ENCODE measurements at regions of chr3 and their contacts with region 1.

Region 1: DNA sequence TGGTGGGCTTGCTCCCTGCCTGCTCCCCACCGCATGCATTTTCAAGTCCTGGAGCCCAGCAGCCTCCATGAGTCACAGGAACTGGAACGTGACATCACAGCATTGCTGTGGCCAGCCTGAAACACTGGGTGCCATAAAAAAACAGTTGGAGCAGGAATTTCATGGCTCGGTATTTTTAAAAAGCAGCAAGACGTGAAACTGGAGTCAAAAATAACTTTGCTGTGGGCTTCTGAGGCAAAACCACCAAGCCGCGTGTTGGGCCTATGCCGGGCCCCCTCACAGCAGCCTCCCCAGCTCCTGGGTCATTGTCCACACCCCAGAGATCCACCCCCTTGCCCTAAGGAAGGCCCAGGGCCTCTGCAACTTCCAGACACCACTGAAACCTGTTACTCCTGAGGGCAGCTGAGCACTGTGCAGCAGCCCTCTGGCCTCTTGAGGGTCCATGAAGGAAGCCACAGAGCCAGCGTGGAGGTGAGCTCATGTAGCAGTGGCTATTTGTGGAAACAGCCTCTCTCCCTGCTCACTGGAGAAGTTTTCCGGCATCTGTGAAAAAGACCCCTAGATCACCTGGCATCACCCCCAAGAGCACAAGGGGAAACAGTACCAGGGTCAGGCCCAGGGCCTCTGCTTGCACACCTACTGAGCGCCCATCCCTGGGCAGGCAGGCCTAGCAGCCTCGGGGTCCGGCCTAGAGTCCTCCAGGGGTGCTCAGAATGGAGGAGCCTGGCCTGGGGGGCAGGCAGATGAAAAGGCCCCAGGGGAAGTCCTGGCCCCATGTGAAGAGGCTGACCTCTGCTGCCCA is 34.0 kb upstream of the DUSP7 start:
- DNase-seq: peak in 1 of 2 donors; percentile 93
- H3K4me3 ChIP-seq: no peak overlapping the region
- H3K27ac ChIP-seq: peak overlapping the region; percentile 98 to 99
- H3K4me1 ChIP-seq: peaks cover 31 to 41% of the 10 kb centered on the region in 2 donors
- H3K27me3 ChIP-seq: no peaks in the 10 kb centered on the region
- CTCF ChIP-seq: no peak

Region 2: GRCh38 chr3:52022323-52023100 is 67.8 kb before region 1 on chr3:
- intact Hi-C with region 1: loop called (anchors 2 kb)
- DNase-seq: peak in 1 of 2 donors; percentile 85
- H3K4me3 ChIP-seq: peak overlapping the region in 1 of 2 donors; percentile 40
- H3K27ac ChIP-seq: peak overlapping the region; percentile 91 to 96
- H3K4me1 ChIP-seq: peaks cover 34 to 76% of the 10 kb centered on the region in 2 donors
- H3K27me3 ChIP-seq: no peaks in the 10 kb centered on the region
- CTCF ChIP-seq: no peak

Region 3: GRCh38 chr3:52070724-52071621 is 19.4 kb before region 1 on chr3:
- intact Hi-C with region 1: loop called (anchors 2 kb)
- DNase-seq: peak in 1 of 2 donors; percentile 89
- H3K4me3 ChIP-seq: no peak overlapping the region
- H3K27ac ChIP-seq: peak overlapping the region; percentile 84 to 95
- H3K4me1 ChIP-seq: peaks cover 3 to 23% of the 10 kb centered on the region in 2 donors
- H3K27me3 ChIP-seq: no peaks in the 10 kb centered on the region
- CTCF ChIP-seq: peak; percentile 5 to 43 (median 8)

Region 4: GRCh38 chr3:52076896-52077780 is 13.2 kb before region 1 on chr3:
- intact Hi-C with region 1: loop called (anchors 1 kb)
- DNase-seq: no peak
- H3K4me3 ChIP-seq: no peak overlapping the region
- H3K27ac ChIP-seq: peak overlapping the region; percentile 75 to 80
- H3K4me1 ChIP-seq: peaks cover 3 to 16% of the 10 kb centered on the region in 2 donors
- H3K27me3 ChIP-seq: no peaks in the 10 kb centered on the region
- CTCF ChIP-seq: peak; percentile 22 to 45 (median 25)

Region 5: DNA sequence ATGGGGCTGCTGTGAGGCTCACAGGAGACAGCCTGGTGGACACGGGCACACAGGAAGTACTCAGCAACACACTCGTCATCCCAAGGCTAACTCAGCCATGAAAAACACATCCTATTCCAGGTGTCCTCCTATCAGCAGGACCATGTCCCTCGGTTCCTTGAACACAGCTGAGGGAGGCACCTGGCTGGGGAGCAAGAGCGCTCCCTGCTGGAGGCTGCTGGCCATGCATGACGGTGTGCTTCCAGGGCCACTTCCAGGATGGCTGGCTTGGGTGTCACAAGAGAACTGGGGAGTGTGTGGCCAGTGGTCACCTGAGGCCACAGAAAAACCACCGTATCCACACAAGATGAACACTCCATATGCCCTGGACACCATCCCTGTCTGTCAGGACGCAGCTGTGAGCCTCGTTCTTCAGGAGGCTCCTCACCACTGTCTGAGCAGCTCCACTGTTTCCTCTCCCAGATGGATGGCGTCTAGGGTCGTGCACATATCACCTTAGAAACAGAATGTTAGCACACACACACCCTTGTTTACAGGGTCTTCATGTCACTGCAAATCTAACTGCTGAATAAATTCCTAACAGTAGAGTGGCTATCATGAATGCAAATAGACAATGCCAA is 32.9 kb after region 1 on chr3:
- intact Hi-C with region 1: loop called (anchors 2 kb)
- DNase-seq: peak in 1 of 2 donors; percentile 89
- H3K4me3 ChIP-seq: no peak overlapping the region
- H3K27ac ChIP-seq: no peak overlapping the region
- H3K4me1 ChIP-seq: peaks cover 0 to 6% of the 10 kb centered on the region in 2 donors
- H3K27me3 ChIP-seq: no peaks in the 10 kb centered on the region
- CTCF ChIP-seq: peak; percentile 90 to 98 (median 97)